CD4-positive, alpha-beta T cell (primary cell): ENCODE measurements at regions of chr11 and their contacts with region 1.

Region 1: DNA sequence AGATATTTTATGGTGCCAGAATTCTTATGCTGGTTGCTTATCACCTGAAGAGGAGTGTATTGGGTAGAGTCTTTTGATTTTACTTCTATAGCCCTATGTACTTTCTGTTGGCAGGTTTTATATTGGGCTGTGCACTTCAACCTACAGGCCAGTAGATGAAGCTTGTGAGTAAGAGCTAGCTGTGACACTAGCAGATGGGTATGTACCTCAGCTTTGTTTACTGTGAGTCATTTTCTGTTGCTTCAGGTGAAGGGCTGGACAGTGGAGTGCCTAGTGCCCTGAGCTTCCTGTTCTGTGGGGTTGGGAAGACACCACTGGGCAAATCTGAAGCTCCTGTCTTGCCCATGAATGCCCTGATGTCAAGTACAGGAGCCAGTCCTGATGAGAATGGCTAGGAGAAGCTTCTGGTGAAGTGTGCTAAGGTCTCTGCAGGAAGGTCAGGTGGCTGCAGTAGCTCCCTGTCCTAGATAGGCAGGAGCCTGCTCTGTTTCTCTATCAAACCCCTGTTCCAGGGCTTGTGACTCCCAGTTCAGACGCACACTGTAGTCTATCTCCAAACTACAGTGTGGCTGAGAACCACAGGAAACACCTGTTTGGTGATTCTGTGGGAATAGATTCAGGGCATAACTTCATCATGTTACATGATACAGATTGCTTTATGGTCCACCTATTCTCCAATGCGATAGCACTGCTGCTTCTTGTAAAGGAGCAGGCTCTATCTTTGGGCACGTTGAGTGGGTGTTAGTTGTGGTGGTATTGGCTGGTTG is 755.7 kb downstream of the KCNA4 start:
- DNase-seq: no peak
- ATAC-seq: no peak
- H3K4me3 ChIP-seq: no peak overlapping the region
- H3K4me3 Mint-ChIP-seq: no peak overlapping the region
- H3K27ac ChIP-seq: no peak overlapping the region
- H3K27ac Mint-ChIP-seq: no peak overlapping the region
- H3K4me1 ChIP-seq: no peaks in the 10 kb centered on the region
- H3K4me1 Mint-ChIP-seq: no peaks in the 10 kb centered on the region
- H3K27me3 ChIP-seq: no peaks in the 10 kb centered on the region
- H3K27me3 Mint-ChIP-seq: no peaks in the 10 kb centered on the region
- CTCF ChIP-seq: no peak

Region 2: DNA sequence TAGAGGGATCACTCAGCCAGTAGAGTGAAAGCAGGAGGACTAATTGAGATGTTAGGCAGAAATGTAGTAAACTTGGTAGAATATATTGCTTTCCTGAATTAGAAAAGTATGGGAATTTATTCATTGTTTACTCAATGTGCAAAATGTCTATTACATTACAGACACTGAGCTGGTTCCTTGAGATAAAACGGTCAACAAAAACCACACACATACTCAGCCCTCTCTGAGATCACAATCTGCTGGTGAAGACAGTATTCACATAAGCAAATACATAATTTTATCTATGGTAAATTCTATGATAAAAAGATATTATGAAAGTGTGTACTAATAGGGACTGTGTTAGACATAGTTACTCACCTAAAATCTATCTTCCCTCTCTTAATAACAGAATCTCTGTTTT is 77.8 kb before region 1 on chr11:
- CTCF ChIA-PET with region 1: no interaction called
- POLR2A ChIA-PET with region 1: no interaction called
- intact Hi-C with region 1: no loop called
- DNase-seq: no peak
- ATAC-seq: no peak
- H3K4me3 ChIP-seq: no peak overlapping the region
- H3K4me3 Mint-ChIP-seq: no peak overlapping the region
- H3K27ac ChIP-seq: no peak overlapping the region
- H3K27ac Mint-ChIP-seq: no peak overlapping the region
- H3K4me1 ChIP-seq: no peaks in the 10 kb centered on the region
- H3K4me1 Mint-ChIP-seq: no peaks in the 10 kb centered on the region
- H3K27me3 ChIP-seq: no peaks in the 10 kb centered on the region
- H3K27me3 Mint-ChIP-seq: no peaks in the 10 kb centered on the region
- CTCF ChIP-seq: no peak

Region 3: GRCh38 chr11:29243616-29244015 is 17.5 kb before region 1 on chr11:
- CTCF ChIA-PET with region 1: no interaction called
- POLR2A ChIA-PET with region 1: no interaction called
- intact Hi-C with region 1: no loop called
- DNase-seq: no peak
- ATAC-seq: no peak
- H3K4me3 ChIP-seq: no peak overlapping the region
- H3K4me3 Mint-ChIP-seq: no peak overlapping the region
- H3K27ac ChIP-seq: no peak overlapping the region
- H3K27ac Mint-ChIP-seq: no peak overlapping the region
- H3K4me1 ChIP-seq: no peaks in the 10 kb centered on the region
- H3K4me1 Mint-ChIP-seq: no peaks in the 10 kb centered on the region
- H3K27me3 ChIP-seq: no peaks in the 10 kb centered on the region
- H3K27me3 Mint-ChIP-seq: no peaks in the 10 kb centered on the region
- CTCF ChIP-seq: no peak

Region 4: DNA sequence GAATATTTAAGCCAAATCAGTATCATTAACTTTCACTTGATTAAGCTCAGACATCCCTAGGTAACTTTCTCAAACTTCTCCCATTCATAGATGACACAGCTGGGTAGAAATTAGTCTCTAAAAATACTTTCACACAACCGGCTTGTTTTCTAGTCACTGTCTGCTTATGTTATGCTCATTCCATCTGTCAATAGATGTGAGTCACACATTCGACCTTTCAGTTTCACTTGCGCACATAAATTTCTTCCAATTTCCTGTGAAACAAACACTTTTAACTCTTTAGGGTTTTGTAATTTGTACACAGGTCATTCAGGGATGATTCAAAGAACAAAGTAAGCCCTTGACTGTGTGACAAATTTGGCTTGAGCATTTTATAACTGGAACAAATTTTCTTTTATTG is 32.7 kb after region 1 on chr11:
- CTCF ChIA-PET with region 1: no interaction called
- POLR2A ChIA-PET with region 1: no interaction called
- intact Hi-C with region 1: loop called in 1 of 2 experiments (anchors 1 kb)
- DNase-seq: no peak
- ATAC-seq: no peak
- H3K4me3 ChIP-seq: no peak overlapping the region
- H3K4me3 Mint-ChIP-seq: no peak overlapping the region
- H3K27ac ChIP-seq: no peak overlapping the region
- H3K27ac Mint-ChIP-seq: no peak overlapping the region
- H3K4me1 ChIP-seq: no peaks in the 10 kb centered on the region
- H3K4me1 Mint-ChIP-seq: no peaks in the 10 kb centered on the region
- H3K27me3 ChIP-seq: no peaks in the 10 kb centered on the region
- H3K27me3 Mint-ChIP-seq: no peaks in the 10 kb centered on the region
- CTCF ChIP-seq: no peak

Region 5: DNA sequence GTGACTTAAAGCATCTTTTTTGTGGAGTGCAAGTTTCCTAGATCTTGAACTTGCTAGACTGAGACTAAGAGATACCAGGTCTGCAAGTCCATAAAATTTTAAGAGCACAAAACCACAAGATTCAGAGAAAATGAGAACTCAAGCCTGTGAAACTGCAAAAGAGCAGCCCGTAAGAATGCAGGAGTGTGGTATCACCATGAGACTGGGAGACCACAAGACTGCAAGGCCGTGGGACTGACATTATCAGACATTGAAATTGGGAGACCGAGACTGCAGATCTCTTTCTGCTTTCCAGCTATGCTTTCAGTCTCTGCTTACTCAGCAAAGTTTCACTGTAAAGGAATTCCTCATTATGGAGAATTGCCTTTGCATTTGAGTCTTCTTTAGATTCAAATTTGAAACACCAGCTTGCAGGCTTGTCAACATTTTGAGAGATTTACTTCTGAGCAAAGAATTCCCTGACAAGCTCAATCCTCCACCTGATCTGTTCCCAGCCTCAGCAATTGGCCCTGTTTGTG is 134.5 kb after region 1 on chr11:
- CTCF ChIA-PET with region 1: no interaction called
- POLR2A ChIA-PET with region 1: no interaction called
- intact Hi-C with region 1: no loop called
- DNase-seq: no peak
- ATAC-seq: no peak
- H3K4me3 ChIP-seq: no peak overlapping the region
- H3K4me3 Mint-ChIP-seq: no peak overlapping the region
- H3K27ac ChIP-seq: no peak overlapping the region
- H3K27ac Mint-ChIP-seq: no peak overlapping the region
- H3K4me1 ChIP-seq: no peaks in the 10 kb centered on the region
- H3K4me1 Mint-ChIP-seq: no peaks in the 10 kb centered on the region
- H3K27me3 ChIP-seq: no peaks in the 10 kb centered on the region
- H3K27me3 Mint-ChIP-seq: no peaks in the 10 kb centered on the region
- CTCF ChIP-seq: no peak